Upper lobe of right lung (tissue), 1 donor: ENCODE measurements at regions of chr6 and their contacts with region 1.

Region 1: GRCh38 chr6:124870611-124871459 is 91.4 kb upstream of the RNF217 start:
- DNase-seq: no peak
- ATAC-seq: no peak
- H3K4me3 ChIP-seq: no peak overlapping the region
- H3K27ac ChIP-seq: no peak overlapping the region
- H3K4me1 ChIP-seq: no peaks in the 10 kb centered on the region
- H3K27me3 ChIP-seq: no peaks in the 10 kb centered on the region
- CTCF ChIP-seq: peak; percentile 74

Region 2: DNA sequence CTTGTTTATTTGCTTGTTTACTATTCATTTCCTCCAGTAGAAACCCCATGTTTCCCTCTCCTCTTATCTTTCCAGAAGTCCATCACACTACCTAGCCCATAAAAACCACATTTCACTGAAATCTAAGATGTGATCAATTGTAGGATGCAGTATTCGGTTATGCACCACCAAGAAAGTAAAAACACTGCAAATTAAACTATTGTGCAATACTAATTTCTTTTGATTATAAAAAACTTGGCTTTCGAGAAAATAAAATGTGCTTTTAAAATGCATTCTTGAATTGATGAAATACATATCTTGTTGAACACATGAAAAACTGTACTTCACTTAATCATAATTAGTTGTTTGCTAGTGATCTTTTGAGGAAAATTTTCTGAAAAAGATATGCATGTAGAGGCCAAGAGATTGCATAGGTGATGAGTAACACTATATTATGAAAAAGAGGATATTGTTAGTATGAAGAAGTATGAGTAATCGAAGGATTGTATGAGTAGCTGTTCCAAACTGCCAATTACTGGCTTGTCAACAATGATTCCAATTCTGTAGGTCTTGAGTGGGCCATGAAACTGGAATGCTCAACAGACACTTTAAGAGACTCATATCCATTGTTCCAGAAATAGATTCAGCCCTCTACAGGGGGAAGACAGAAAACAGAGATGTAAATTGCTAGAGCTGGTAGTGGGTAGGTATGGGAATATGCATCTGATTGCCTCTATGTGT is 171.1 kb after region 1 on chr6:
- intact Hi-C with region 1: no loop called
- DNase-seq: no peak
- ATAC-seq: no peak
- H3K4me3 ChIP-seq: no peak overlapping the region
- H3K27ac ChIP-seq: no peak overlapping the region
- H3K4me1 ChIP-seq: no peaks in the 10 kb centered on the region
- H3K27me3 ChIP-seq: no peaks in the 10 kb centered on the region
- CTCF ChIP-seq: no peak

Region 3: GRCh38 chr6:125114248-125114858 is 243.5 kb after region 1 on chr6:
- intact Hi-C with region 1: loop called (anchors 5 kb)
- DNase-seq: no peak
- ATAC-seq: peak; percentile 62
- H3K4me3 ChIP-seq: no peak overlapping the region
- H3K27ac ChIP-seq: no peak overlapping the region
- H3K4me1 ChIP-seq: no peaks in the 10 kb centered on the region
- H3K27me3 ChIP-seq: no peaks in the 10 kb centered on the region
- CTCF ChIP-seq: peak; percentile 91